ENCODE measurements at regions of chr18 and their contacts with region 1.

Region 1: GRCh38 chr18:54776282-54776977 is 51.8 kb upstream of the RAB27B start:
- DNase-seq: peak; percentile 68
- H3K4me3 Mint-ChIP-seq: peak overlapping the region; percentile 14
- H3K27ac Mint-ChIP-seq: peak overlapping the region; percentile 35
- H3K4me1 Mint-ChIP-seq: peaks cover 14% of the 10 kb centered on the region
- H3K27me3 Mint-ChIP-seq: peaks cover 2% of the 10 kb centered on the region

Region 2: DNA sequence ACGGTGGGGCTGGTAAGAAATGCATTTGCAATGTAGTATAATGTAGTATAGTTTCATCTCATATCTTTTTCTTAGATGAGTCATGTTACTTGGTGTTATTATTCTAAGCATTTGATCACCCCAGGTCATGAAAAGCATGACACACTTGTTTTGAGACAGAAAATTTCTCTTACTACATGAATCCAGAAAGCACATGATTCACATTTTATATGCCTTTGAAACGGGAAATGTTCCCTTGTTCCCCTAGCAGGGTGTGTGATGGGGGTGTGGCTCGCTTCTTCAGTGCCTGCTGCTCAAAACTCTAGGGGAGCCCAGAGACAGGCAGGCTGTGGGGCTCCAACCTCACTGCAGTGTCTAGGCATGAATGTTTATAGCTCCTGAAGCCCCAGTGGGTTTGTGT is 64.1 kb before region 1 on chr18:
- intact Hi-C with region 1: loop called (anchors 2 kb)
- DNase-seq: peak; percentile 60
- H3K4me3 Mint-ChIP-seq: no peak overlapping the region
- H3K27ac Mint-ChIP-seq: no peak overlapping the region
- H3K4me1 Mint-ChIP-seq: peaks cover 46% of the 10 kb centered on the region
- H3K27me3 Mint-ChIP-seq: peaks cover 22% of the 10 kb centered on the region

Region 3: DNA sequence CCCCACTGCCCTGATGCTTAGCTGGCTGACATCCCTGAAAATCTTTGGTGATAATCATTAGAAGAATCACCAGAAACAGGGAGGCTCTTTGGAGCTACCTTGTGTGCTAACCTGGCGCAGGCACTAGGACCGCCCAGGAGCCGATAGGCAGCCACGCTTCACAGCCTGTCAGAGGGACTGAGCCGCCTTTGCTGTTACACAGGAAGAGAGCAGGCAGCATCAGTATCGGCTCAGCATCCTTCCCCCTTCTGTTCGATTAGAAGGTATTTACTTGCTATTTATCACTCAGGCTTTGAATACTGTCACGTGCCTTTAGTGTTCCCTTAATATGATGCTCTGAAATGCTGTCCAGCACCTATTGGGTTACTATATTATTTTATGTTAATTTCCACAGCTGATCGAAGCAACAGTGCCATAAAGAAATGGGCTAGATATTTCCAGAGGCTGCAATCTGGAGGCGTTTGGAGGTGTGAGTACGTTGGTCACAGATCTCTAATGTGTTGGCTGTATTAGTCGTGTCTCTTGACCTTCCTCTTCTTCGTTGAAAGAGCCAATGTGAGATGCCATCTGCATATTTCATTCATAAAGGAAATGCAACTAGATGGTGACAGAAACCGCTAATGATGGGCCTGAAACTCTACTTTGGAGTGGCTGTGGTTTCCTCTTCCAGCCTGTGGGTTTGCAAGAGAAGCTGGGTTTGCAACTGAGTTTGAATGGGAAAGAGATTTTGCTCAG is 58.6 kb before region 1 on chr18:
- intact Hi-C with region 1: loop called (anchors 1 kb)
- DNase-seq: peak; percentile 88
- H3K4me3 Mint-ChIP-seq: peak overlapping the region; percentile 77
- H3K27ac Mint-ChIP-seq: peak overlapping the region; percentile 15
- H3K4me1 Mint-ChIP-seq: peaks cover 48% of the 10 kb centered on the region
- H3K27me3 Mint-ChIP-seq: peaks cover 29% of the 10 kb centered on the region

Region 4: GRCh38 chr18:54805571-54806334 is 29.3 kb after region 1 on chr18:
- intact Hi-C with region 1: loop called (anchors 1 kb)
- DNase-seq: peak; percentile 73
- H3K4me3 Mint-ChIP-seq: no peak overlapping the region
- H3K27ac Mint-ChIP-seq: peak overlapping the region; percentile 61
- H3K4me1 Mint-ChIP-seq: peaks cover 12% of the 10 kb centered on the region
- H3K27me3 Mint-ChIP-seq: peaks cover 17% of the 10 kb centered on the region

Region 5: DNA sequence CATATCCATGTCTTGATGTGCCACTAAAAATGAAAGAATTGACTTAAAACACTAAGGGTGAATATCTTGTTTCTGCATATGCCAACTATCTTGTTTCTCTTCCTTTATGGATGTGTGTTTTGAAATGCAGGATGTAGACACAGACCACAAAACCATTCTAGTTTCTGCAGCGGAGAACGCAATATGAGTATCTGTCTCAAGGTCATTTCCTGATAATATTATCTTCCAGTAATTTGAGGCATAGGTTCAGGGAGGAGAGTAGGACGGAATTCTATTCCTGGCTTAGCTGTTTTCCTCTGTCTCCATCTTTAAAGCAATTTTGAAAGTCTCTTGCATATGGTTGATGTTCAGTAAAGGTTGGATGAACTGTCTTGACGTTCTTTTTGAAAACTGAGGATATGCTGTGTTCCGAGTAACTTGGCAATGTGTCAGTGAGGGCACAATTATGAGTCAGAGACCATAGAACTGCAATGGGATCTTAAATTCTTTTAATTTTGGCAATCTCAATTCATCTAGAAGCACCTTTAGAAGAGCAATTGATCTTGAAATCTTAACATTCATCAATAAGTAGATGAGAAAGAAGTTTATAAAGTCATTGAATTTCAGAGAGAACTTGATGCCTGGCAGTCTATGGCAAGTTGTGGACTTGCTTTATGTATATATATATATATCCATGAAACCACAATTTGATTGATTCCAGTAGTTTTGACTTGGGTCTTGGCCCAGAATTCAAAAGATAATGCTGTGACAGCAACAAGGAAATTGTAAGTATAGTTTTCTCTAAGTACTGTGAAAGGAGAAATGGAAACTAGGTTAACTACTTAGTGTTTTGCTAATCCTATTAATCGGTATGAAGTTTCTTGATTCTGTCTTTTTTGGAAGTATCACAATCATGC is 76.6 kb after region 1 on chr18:
- intact Hi-C with region 1: loop called (anchors 2 kb)
- DNase-seq: no peak
- H3K4me3 Mint-ChIP-seq: no peak overlapping the region
- H3K27ac Mint-ChIP-seq: no peak overlapping the region
- H3K4me1 Mint-ChIP-seq: peaks cover 12% of the 10 kb centered on the region
- H3K27me3 Mint-ChIP-seq: peaks cover 3% of the 10 kb centered on the region